Activated CD4-positive, alpha-beta memory T cell treated with anti-CD3 and anti-CD28 coated beads for 36 hours (primary cell): ENCODE measurements at regions of chr2 and their contacts with region 1.

Region 1: DNA sequence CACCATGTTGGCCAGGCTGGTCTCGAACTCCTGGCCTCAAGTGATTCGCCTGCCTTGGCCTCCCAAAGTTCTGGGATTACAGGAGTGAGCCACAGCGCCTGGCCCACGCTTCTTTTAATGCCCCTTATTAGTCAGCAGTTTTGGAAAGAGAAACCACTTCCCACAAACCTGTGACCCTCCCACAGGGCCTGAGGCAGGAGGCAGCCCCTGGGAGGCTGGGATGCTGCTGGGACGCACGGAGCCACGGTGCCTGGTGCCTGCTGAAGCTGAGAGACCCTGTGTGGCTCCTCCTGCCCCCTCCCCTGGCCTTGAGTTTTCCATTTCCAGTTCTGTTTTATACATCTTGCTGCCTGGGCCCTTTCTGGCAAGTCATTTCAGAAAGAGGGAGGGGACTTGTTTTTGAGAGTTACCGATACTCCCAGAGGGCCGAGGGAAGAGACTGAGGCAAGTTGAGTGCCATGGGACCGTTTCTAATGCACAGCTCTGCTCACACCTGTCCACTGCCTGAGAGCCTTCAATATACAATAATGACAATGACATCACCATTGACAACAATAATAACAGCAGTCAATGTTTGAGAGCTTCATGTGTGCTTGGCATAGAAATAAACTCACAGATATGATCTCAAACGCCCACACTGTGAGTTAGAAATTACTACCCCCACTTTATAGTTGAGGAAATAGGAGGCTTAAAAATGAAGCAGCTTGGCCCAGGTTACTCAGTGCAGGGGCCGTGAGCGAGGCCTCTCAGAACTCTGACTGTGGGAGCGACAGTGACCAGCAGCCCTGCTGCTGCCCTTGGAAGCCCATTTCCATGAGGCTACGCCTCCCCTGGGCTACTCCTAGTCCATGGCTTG is 78.1 kb upstream of the YWHAQ start:
- DNase-seq: peak; percentile 80
- H3K4me3 Mint-ChIP-seq: no peak overlapping the region
- H3K27ac Mint-ChIP-seq: peak overlapping the region; percentile 93
- H3K4me1 Mint-ChIP-seq: peaks cover 63% of the 10 kb centered on the region
- H3K27me3 Mint-ChIP-seq: no peaks in the 10 kb centered on the region

Region 2: DNA sequence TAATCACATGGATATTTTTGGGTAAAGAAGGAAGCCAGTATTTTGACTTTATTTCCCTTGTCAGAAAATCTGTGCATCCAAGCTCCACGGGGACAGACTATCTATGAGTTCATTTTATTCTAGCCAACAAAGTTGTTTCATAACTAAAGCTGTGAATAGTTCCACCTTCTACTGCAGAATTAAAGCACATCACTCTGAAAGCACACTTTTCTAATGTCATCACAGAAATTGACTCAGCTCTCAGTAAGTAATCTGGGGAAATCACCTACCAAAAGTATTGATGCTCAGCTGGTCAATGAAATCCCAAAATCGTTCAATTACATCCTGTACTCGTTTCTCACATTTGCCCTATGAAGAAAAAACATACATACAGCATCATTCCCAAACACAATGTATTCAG is 215.4 kb before region 1 on chr2:
- CTCF ChIA-PET with region 1: no interaction called
- POLR2A ChIA-PET with region 1: no interaction called
- intact Hi-C with region 1: loop called (anchors 2 kb)
- DNase-seq: no peak
- H3K4me3 Mint-ChIP-seq: no peak overlapping the region
- H3K27ac Mint-ChIP-seq: peak overlapping the region; percentile 80
- H3K4me1 Mint-ChIP-seq: peaks cover 52% of the 10 kb centered on the region
- H3K27me3 Mint-ChIP-seq: no peaks in the 10 kb centered on the region

Region 3: DNA sequence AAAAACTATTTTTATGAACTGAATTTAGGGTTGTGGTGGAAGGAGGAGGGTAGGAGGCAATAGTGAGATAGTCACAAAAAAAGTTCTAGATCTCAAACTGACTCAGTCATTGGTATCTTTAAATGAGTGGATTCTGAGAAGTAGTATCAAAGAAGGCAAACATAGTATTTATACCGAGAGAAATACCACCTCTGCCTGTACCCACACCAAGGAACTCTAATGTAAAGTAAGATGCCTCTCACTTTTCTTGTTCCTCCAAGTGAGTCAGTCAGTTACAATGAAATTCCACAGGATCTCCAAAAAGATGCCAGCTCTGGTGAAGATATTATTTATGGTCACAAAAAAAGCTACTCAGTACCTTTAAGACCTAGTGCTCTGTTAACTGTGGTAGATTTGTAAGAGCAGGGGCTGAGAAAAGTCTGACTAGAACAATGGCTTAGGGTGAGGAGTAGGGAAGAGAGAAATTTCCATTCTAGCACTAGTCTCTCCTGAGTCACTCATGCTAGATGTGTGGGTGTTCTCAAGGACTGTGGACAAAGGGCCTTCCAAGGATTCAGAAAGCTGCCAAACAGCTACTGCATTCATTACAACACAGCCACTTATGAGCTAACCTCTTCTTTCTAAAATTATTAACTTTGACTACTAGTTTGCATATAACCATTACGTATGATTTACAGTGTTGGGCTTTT is 114.4 kb before region 1 on chr2:
- CTCF ChIA-PET with region 1: interaction called, 4 read pairs
- POLR2A ChIA-PET with region 1: interaction called, 5 read pairs
- intact Hi-C with region 1: loop called (anchors 1 kb)
- DNase-seq: no peak
- H3K4me3 Mint-ChIP-seq: no peak overlapping the region
- H3K27ac Mint-ChIP-seq: peak overlapping the region; percentile 83
- H3K4me1 Mint-ChIP-seq: peaks cover 81% of the 10 kb centered on the region
- H3K27me3 Mint-ChIP-seq: no peaks in the 10 kb centered on the region

Region 4: GRCh38 chr2:9613291-9613690 is 95.6 kb before region 1 on chr2:
- CTCF ChIA-PET with region 1: interaction called, 3 read pairs
- POLR2A ChIA-PET with region 1: no interaction called
- intact Hi-C with region 1: loop called (anchors 1 kb)
- DNase-seq: no peak
- H3K4me3 Mint-ChIP-seq: no peak overlapping the region
- H3K27ac Mint-ChIP-seq: no peak overlapping the region
- H3K4me1 Mint-ChIP-seq: peaks cover 90% of the 10 kb centered on the region
- H3K27me3 Mint-ChIP-seq: no peaks in the 10 kb centered on the region

Region 5: GRCh38 chr2:9686061-9686460 is 22.9 kb before region 1 on chr2:
- CTCF ChIA-PET with region 1: no interaction called
- POLR2A ChIA-PET with region 1: no interaction called
- intact Hi-C with region 1: no loop called
- DNase-seq: no peak
- H3K4me3 Mint-ChIP-seq: no peak overlapping the region
- H3K27ac Mint-ChIP-seq: no peak overlapping the region
- H3K4me1 Mint-ChIP-seq: peaks cover 14% of the 10 kb centered on the region
- H3K27me3 Mint-ChIP-seq: no peaks in the 10 kb centered on the region

Region 6: GRCh38 chr2:9739531-9739964 is 30.6 kb after region 1 on chr2:
- CTCF ChIA-PET with region 1: interaction called, 4 read pairs
- POLR2A ChIA-PET with region 1: interaction called, 7 read pairs
- intact Hi-C with region 1: loop called (anchors 1 kb)
- DNase-seq: peak; percentile 77
- H3K4me3 Mint-ChIP-seq: peak overlapping the region; percentile 75
- H3K27ac Mint-ChIP-seq: peak overlapping the region; percentile 89
- H3K4me1 Mint-ChIP-seq: peaks cover 52% of the 10 kb centered on the region
- H3K27me3 Mint-ChIP-seq: no peaks in the 10 kb centered on the region

Region 7: GRCh38 chr2:9770308-9771100 is 61.6 kb after region 1 on chr2:
- CTCF ChIA-PET with region 1: interaction called, 19 read pairs
- POLR2A ChIA-PET with region 1: no interaction called
- intact Hi-C with region 1: no loop called
- DNase-seq: peak; percentile 74
- H3K4me3 Mint-ChIP-seq: no peak overlapping the region
- H3K27ac Mint-ChIP-seq: no peak overlapping the region
- H3K4me1 Mint-ChIP-seq: peaks cover 23% of the 10 kb centered on the region
- H3K27me3 Mint-ChIP-seq: no peaks in the 10 kb centered on the region

Region 8: DNA sequence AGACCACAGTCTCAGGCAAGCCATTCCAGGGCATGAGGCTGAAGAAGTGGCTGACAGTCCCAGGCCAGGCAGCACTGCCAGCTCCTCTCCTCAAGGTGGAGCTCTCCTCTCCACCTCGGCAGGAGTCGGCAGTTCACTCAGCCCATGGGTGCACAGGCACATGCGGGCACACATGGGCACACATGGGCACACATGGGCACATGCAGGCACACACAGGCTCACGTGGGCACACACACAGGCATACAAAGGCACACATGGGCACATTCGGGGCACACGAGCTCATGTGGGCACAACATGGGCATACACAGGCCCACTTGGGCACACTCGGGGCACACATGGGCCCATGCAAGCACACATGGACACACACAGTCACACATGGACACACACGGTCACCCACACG is 69.1 kb after region 1 on chr2:
- CTCF ChIA-PET with region 1: no interaction called
- POLR2A ChIA-PET with region 1: no interaction called
- intact Hi-C with region 1: loop called (anchors 1 kb)
- DNase-seq: peak; percentile 55
- H3K4me3 Mint-ChIP-seq: no peak overlapping the region
- H3K27ac Mint-ChIP-seq: peak overlapping the region; percentile 38
- H3K4me1 Mint-ChIP-seq: peaks cover 47% of the 10 kb centered on the region
- H3K27me3 Mint-ChIP-seq: no peaks in the 10 kb centered on the region